ENCODE measurements at regions of chr1 and their contacts with region 1.

Region 1: DNA sequence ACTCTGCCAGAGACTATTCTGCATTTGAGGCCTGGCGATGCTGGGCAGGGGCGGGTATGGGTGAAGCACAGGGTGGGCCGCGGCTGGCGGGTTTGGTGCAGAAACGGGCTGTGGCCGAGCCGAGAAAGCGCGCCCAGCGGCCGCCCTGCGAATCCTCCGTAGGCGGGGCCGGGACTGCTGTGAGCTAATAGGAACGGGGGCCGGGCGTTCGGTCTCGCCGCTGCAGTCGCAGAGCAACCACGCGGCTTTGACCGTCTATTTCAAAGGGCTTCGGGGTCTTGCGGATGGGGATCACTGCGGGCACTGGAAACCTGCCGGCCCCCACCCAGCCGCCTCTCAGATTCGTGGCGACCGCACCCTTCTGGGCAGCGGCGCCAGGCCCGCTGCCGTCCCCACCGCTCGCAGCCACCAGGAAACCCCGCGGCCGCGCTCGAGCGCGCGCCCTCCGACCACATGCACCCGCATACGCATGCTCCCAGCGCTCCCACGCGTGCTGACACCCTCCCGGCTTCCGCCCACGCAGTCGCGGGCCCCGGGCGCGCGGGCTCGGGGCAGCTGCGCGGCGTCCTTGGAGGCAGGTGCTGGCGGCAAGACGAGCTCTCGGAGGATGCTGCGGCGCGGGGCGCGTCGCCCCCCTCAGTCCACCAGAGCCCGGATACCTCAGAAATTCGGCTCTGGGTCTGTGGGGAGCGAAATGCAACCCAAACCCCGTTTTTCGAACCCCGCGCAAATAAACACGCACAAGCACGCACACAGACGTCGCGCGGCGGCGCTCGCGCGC is 32.6 kb downstream of the DNTTIP2 start:
- DNase-seq: peak; percentile 80 to 92 (median 86)
- ATAC-seq: peak; percentile 55 to 59
- H3K4me3 Mint-ChIP-seq: peak overlapping the region; percentile 83 to 99 (median 92)
- H3K27ac Mint-ChIP-seq: peak overlapping the region; percentile 92 to 100 (median 96)
- H3K4me1 Mint-ChIP-seq: peaks cover 15 to 42% (median 35%) of the 10 kb centered on the region in 4 donors
- H3K27me3 Mint-ChIP-seq: peaks cover 0 to 6% (median 0%) of the 10 kb centered on the region in 5 donors

Region 2: GRCh38 chr1:93078986-93079654 is 767.3 kb before region 1 on chr1 and contains the start of gene MTF2:
- POLR2A ChIA-PET with region 1: interaction called, 23 read pairs
- DNase-seq: peak; percentile 83 to 95 (median 90)
- ATAC-seq: peak; percentile 83 to 88
- H3K4me3 Mint-ChIP-seq: peak within 1 kb of the TSS; percentile 90 to 100 (median 97)
- H3K27ac Mint-ChIP-seq: peak within 1 kb of the TSS; percentile 88 to 99 (median 99)
- H3K4me1 Mint-ChIP-seq: peaks cover 15 to 60% (median 42%) of the 10 kb centered on the region in 4 donors
- H3K27me3 Mint-ChIP-seq: no peaks in the 10 kb centered on the region
- polyA plus RNA-seq, gene MTF2: 53.0 to 67.7 (median 61.0) TPM

Region 3: GRCh38 chr1:93345633-93346420 is 500.6 kb before region 1 on chr1 and contains the start of gene DR1:
- POLR2A ChIA-PET with region 1: interaction called, 13 read pairs
- DNase-seq: peak; percentile 82 to 95 (median 89)
- ATAC-seq: peak; percentile 78 to 83
- H3K4me3 Mint-ChIP-seq: peak within 1 kb of the TSS; percentile 92 to 100 (median 98)
- H3K27ac Mint-ChIP-seq: peak within 1 kb of the TSS; percentile 97 to 99 (median 98)
- H3K4me1 Mint-ChIP-seq: peaks cover 22 to 57% (median 41%) of the 10 kb centered on the region in 4 donors
- H3K27me3 Mint-ChIP-seq: peaks cover 0 to 2% (median 0%) of the 10 kb centered on the region in 5 donors
- polyA plus RNA-seq, gene DR1: 54.3 to 68.3 (median 66.0) TPM

Region 4: DNA sequence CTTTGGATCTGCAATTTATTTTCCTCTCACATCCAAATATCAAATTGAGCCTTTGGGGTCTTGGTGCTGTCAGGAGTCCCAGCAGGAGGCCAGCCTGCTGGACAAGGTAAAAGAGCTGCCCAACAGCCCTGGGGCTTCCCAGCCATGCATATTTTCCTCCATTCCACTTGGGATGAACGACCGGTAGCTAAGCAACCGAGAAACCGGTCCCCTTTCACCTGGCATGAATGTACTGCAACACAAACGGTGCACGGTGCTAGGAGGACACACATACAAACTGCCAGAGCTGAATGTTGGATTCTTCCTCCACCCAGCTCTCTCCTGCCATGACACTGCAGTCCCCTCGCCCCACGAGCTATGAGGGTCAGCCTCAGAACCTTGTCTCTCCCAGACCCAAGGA is 207.4 kb before region 1 on chr1:
- POLR2A ChIA-PET with region 1: no interaction called
- DNase-seq: no peak
- ATAC-seq: no peak
- H3K4me3 Mint-ChIP-seq: no peak overlapping the region
- H3K27ac Mint-ChIP-seq: no peak overlapping the region
- H3K4me1 Mint-ChIP-seq: peaks cover 4 to 9% (median 7%) of the 10 kb centered on the region in 4 donors
- H3K27me3 Mint-ChIP-seq: no peaks in the 10 kb centered on the region

Region 5: GRCh38 chr1:93749894-93750301 is 96.5 kb before region 1 on chr1:
- POLR2A ChIA-PET with region 1: no interaction called
- DNase-seq: no peak
- ATAC-seq: no peak
- H3K4me3 Mint-ChIP-seq: no peak overlapping the region
- H3K27ac Mint-ChIP-seq: peak overlapping the region in 1 of 10 donors; percentile 26
- H3K4me1 Mint-ChIP-seq: peaks cover 3 to 33% (median 17%) of the 10 kb centered on the region in 4 donors
- H3K27me3 Mint-ChIP-seq: peaks cover 0 to 13% (median 6%) of the 10 kb centered on the region in 5 donors

Region 6: DNA sequence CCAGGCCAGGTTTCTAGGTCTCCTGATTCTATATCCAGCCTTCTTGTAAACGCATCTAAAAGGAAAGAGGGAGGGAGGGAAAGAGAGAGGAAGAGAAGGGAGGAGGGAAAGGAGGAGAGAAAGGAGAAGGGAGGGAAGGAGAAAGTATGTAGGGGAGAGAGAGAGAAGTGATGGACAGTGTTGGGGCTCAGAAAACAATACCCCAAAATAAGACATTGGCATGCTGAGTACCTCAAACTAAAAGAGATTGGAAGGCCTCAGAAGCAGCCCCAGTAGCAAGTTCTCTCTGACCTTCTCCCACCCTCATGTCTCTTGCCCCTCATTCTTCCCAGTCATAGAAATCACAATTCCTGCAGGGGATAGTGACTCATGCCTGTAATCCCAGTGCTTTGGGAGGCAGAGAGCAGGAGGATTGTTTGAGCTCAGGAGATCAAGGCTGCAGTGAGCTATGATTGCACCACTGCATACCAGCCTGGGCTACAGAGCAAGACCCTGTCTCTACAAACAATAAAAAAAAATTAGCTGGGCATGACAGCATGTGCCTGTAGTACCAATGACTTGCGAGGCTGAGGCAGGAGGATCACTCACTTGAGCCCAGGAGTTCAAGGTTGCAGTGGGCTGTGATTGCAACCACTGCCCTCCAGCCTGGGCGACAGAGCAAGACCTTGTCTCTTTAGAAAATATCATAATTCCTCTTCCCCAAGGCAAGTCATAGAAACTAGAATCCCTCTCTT is 18.6 kb before region 1 on chr1:
- POLR2A ChIA-PET with region 1: no interaction called
- DNase-seq: no peak
- ATAC-seq: no peak
- H3K4me3 Mint-ChIP-seq: no peak overlapping the region
- H3K27ac Mint-ChIP-seq: no peak overlapping the region
- H3K4me1 Mint-ChIP-seq: peaks cover 0 to 6% (median 0%) of the 10 kb centered on the region in 4 donors
- H3K27me3 Mint-ChIP-seq: peaks cover 0 to 3% (median 0%) of the 10 kb centered on the region in 5 donors

Region 7: GRCh38 chr1:93878889-93879586 is 32.6 kb after region 1 on chr1 and contains the start of gene DNTTIP2:
- POLR2A ChIA-PET with region 1: interaction called, 48 read pairs
- DNase-seq: peak; percentile 72 to 94 (median 88)
- ATAC-seq: peak; percentile 91 to 92
- H3K4me3 Mint-ChIP-seq: peak within 1 kb of the TSS; percentile 90 to 99 (median 99)
- H3K27ac Mint-ChIP-seq: peak within 1 kb of the TSS; percentile 97 to 100 (median 99)
- H3K4me1 Mint-ChIP-seq: peaks cover 25 to 50% (median 45%) of the 10 kb centered on the region in 4 donors
- H3K27me3 Mint-ChIP-seq: no peaks in the 10 kb centered on the region
- polyA plus RNA-seq, gene DNTTIP2: 68.8 to 72.9 (median 70.9) TPM

Region 8: DNA sequence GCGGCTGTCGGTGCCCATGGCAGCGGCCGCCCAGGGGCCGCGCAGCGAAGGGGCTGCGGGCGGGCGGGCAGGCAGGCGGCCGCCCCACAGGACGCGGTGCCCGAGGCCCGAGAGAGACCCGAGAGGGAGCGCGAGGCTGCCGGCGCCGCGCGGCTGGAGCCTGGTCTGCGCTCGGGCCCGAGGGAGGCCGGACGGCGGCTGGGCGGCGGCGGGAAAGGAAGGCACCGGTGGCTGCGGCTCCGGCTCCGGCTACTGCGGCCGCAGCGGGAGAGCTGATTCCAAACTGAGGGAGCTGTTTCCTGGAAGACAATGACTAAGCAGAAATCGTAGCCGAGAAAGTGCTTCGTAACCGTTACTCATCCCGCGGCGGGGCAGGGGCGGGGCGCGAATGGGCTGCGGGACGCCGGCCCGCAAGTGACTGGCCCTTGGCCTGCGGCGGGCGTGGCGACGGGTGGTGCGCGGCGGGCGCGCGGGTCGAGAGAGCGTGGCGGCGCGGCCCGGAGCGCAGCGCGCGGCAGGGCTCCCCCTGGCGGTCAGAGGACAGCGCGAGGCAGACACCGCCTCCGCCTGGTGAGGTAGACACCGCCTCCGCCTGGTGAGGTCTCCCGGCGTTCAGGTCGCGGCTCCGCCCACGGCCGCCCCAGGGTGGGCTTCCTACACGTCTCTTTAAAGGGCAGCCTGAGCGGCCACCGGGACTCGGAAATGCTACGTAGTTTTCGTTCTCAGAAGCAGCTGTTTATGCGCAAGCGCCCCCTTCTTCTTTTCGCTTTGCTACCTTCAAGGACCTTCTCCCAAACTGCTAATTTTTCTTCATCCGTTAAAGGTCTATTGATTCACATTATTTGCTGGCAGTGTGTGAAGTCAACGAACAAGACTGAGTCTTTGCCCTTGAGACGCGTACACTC is 63.0 kb after region 1 on chr1 and contains the start of gene GCLM:
- POLR2A ChIA-PET with region 1: interaction called, 20 read pairs
- DNase-seq: peak; percentile 83 to 93 (median 90)
- ATAC-seq: peak; percentile 90 to 91
- H3K4me3 Mint-ChIP-seq: peak within 1 kb of the TSS; percentile 83 to 95 (median 92)
- H3K27ac Mint-ChIP-seq: peak within 1 kb of the TSS; percentile 75 to 96 (median 94)
- H3K4me1 Mint-ChIP-seq: peaks cover 13 to 40% (median 32%) of the 10 kb centered on the region in 4 donors
- H3K27me3 Mint-ChIP-seq: peaks cover 0 to 5% (median 0%) of the 10 kb centered on the region in 5 donors
- polyA plus RNA-seq, gene GCLM: 11.3 to 18.2 (median 14.2) TPM

Region 9: DNA sequence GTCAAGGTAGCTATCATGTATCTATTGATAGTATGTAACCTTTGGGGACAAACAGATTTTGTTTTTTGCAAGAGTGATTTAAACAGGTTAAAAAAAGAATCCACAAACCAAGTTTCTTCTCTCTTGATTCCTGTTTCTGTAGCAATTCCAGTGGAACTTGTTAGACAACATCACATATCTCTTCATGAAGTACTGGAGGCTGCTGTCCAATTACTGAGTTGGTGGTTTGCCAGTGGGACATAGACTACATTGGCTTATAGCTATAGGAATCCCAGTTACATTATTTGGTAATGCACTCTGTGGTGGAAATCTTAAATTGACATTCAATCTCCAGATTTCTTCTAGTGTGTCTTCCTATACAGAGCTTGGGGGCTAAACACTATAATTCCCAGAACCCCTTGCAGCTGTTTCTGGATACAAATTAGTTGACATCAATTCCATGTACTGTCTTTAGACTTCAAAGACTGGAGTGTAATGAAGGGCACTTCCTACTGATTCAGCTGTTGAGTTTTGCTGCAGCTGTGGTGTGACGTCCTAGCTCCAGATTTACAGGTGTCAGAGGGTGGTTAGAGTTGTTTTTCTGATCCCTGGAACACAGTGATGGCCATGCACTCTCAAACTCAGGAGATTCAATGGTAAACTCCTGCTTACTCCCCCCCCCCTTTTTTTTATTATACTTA is 92.2 kb after region 1 on chr1:
- POLR2A ChIA-PET with region 1: no interaction called
- DNase-seq: no peak
- ATAC-seq: no peak
- H3K4me3 Mint-ChIP-seq: no peak overlapping the region
- H3K27ac Mint-ChIP-seq: no peak overlapping the region
- H3K4me1 Mint-ChIP-seq: no peaks in the 10 kb centered on the region
- H3K27me3 Mint-ChIP-seq: peaks cover 0 to 4% (median 0%) of the 10 kb centered on the region in 5 donors

Region 10: DNA sequence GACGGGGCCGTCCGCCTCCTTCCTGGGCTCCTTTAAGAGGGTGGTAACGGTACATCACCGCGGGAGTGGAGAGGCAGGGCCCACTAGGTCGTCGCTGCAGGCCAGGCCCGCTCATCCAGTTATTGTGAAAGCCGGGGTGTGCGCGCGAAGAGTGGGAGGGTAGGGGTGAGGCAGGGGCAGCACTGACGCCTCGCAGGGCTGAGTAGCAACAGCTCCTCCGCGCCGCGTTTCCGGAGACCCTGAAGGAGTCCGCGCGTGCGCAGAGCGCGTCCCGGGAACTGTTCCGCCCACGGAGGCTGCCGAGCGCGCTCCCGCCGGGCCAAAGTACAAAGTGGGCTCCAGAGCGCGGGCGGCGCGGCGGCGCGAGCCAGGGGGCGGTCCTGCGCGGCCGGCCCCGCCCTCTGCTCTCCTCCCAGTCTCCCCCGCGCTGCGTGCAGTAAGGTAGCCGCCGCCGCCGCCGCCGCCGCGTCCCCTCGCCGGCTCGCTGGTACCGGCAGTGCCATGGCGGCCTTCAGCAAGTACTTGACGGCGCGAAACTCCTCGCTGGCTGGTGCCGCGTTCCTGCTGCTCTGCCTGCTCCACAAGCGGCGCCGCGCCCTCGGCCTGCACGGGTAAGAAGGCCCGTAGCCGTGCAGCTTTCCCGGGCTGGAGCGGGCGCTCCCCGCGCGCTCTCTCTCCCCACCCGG is 571.7 kb after region 1 on chr1 and contains the start of gene ABCD3:
- POLR2A ChIA-PET with region 1: interaction called, 13 read pairs
- DNase-seq: peak; percentile 96 to 99 (median 98)
- ATAC-seq: peak; percentile 89
- H3K4me3 Mint-ChIP-seq: peak within 1 kb of the TSS in 1 of 10 donors; percentile 89
- H3K27ac Mint-ChIP-seq: peak within 1 kb of the TSS in 7 of 10 donors; percentile 36 to 92 (median 88)
- H3K4me1 Mint-ChIP-seq: peaks cover 12 to 41% (median 37%) of the 10 kb centered on the region in 4 donors
- H3K27me3 Mint-ChIP-seq: peaks cover 0 to 5% (median 3%) of the 10 kb centered on the region in 5 donors
- polyA plus RNA-seq, gene ABCD3: 27.3 to 31.6 (median 27.7) TPM

Measured in naive thymus-derived CD8-positive, alpha-beta T cell (primary cell).